ENCODE measurements at regions of chr4 and their contacts with region 1.

Region 1: GRCh38 chr4:144645631-144646522 is at the start of gene HHIP:
- DNase-seq: peak; percentile 54 to 97 (median 68)

Region 2: GRCh38 chr4:144699565-144699964 is 53.7 kb after region 1 on chr4:
- intact Hi-C with region 1: no loop called
- DNase-seq: no peak

Region 3: DNA sequence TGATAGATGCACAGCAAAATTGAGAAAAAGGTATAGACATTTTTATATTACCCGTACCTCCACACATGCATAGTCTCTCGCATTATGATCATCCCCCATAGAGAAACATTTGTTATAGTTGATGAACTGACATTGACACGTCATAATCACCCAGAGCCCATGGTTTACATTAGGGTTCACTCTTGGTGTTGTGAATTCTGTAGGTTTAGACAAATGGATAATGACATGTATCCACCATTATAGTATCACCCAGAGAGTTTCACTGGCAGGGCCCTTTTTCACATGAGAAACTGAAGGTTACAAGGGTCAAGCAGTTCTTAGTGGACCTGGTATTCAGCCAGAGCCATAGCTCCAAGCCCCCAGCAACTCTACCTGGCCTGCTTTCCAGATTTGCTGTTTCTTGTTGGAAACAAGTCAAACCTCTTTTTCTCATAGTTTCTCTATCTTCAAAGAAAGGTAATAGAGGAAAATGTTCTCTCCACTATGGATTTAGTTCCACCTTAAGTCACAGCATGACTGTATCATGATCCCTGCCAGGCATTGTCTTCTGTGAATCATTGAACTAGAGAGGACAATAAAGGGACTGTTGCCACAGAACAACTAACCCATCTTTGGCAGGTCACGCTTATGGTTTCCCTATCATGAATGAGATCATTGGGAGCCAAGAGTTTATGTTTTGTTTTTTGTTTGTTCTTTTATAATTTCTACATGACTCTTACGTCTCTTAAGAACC is 64.1 kb after region 1 on chr4:
- intact Hi-C with region 1: loop called (anchors 5 kb)
- DNase-seq: peak in 3 of 10 donors; percentile 9 to 47 (median 28)

Region 4: DNA sequence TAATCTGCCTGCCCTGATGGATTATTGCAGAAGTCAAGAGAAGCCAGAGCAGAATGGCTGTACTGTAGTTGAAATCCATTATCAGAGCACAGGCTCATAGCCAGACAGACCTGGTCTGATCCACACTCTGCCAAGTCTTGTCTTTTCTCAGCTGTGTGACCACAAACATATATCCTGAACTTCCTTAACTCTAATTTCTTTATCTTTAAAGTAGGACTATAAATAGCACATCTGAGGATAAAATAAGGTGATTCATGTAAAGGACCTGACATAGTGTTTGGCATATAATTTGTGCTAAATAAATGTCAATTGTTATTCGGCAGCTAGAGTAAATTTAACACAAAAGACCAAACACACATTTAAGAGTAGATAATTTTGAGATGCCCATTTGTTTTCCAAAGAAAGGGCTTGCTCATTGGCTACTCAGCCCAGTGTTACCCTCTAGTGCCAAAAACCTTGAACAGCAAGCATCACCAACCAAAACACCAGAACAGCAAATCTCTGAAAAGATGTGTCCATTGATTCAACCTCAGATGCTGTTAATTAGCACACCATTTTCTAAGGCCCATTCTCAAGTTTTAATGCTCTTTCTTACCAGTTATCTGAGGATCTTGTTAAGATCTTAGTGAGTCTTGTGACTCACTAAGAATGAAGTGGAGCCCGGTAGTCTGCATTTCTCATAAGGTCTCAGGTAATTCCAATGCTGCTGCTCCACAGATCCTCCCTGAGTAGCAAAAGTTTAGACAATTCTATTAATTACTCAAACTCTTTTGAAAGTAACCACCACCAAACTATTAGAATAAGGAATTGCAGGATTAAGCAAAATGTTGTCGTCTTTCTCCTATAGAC is 108.9 kb after region 1 on chr4:
- intact Hi-C with region 1: loop called (anchors 10 kb)
- DNase-seq: peak in 1 of 10 donors; percentile 28